ENCODE measurements at regions of chr6 and their contacts with region 1.

Region 1: DNA sequence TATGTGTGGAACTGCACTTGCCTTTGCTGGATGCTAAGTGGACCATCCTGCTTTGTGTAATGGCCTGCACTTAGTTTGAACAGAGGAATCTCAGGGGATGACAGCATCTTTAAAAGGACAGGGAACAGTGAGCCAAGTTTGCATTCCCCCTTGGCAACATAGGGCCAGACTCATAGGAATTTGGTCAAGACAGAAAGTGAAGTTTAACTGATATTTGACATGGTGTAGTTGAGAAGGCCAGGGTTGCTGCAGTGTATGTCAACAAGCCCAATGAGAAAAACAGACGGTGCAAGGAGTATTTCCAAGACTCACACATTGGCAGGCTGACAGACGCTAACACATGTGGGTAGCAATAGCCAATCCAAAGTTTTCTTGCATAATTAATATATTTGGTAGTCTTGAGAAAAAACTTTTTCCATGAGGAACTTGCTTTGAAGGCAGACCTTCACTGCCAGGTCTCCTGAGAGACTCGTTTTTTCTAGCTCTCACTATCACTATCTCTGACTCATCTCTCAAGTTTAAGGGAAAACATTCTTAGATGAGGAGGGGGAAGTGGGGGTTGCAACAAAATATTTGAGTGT is 213.8 kb downstream of the IBTK start:
- DNase-seq: no peak

Region 2: GRCh38 chr6:81838006-81838405 is 195.7 kb before region 1 on chr6:
- intact Hi-C with region 1: loop called in 1 of 2 experiments (anchors 5 kb)
- DNase-seq: no peak

Region 3: GRCh38 chr6:82045965-82046756 is 12.4 kb after region 1 on chr6:
- intact Hi-C with region 1: loop called in 1 of 2 experiments (anchors 1 kb)
- DNase-seq: no peak

Measured in posterior vena cava (tissue), 2 donors.